Activated CD4-positive, alpha-beta memory T cell treated with anti-CD3 and anti-CD28 coated beads for 36 hours (primary cell): ENCODE measurements at regions of chr9 and their contacts with region 1.

Region 1: DNA sequence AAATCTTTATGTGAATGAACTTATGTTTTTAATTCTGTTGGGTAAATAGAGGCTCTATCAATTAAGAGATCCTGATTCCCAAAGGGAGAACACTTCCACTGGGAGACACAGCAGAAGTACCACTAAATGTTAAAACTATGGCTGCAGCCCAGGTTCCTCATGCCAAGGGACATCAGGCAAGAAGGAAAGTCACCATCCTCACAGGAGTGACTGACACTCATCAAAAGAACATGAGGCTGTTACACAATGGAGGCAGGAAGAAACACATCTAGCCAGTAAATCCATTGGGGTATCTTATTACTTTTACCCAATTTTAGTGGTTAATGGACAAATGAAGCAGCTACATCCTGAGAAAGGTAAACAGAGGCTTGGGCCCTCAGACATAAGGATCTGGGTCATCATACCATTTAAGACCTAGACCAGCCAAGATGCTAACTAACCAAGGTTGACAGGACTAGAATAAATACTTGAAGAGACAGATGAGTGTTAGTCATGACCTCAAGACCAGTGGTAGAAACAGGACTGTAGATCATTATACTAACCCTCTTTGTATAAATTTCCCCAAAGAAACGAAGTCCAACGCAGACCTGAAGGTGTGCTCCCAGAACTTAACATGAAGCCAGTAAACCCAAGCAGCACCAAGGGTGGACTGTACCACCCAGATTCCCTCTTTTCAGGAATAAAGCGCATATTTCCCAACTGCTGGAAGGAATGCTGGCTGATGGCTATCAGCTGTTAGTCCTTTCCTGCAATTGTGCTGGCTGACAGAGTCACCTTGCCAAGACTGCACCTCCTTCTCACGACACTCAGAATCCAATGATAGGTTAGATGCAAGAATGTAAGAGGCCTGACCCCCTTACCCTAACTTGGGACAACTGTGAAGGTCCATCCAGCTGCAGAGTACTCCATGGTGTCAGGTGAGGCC is 94.1 kb downstream of the MAPKAP1 start:
- DNase-seq: no peak
- H3K4me3 Mint-ChIP-seq: no peak overlapping the region
- H3K27ac Mint-ChIP-seq: no peak overlapping the region
- H3K4me1 Mint-ChIP-seq: peaks cover 40% of the 10 kb centered on the region
- H3K27me3 Mint-ChIP-seq: no peaks in the 10 kb centered on the region

Region 2: DNA sequence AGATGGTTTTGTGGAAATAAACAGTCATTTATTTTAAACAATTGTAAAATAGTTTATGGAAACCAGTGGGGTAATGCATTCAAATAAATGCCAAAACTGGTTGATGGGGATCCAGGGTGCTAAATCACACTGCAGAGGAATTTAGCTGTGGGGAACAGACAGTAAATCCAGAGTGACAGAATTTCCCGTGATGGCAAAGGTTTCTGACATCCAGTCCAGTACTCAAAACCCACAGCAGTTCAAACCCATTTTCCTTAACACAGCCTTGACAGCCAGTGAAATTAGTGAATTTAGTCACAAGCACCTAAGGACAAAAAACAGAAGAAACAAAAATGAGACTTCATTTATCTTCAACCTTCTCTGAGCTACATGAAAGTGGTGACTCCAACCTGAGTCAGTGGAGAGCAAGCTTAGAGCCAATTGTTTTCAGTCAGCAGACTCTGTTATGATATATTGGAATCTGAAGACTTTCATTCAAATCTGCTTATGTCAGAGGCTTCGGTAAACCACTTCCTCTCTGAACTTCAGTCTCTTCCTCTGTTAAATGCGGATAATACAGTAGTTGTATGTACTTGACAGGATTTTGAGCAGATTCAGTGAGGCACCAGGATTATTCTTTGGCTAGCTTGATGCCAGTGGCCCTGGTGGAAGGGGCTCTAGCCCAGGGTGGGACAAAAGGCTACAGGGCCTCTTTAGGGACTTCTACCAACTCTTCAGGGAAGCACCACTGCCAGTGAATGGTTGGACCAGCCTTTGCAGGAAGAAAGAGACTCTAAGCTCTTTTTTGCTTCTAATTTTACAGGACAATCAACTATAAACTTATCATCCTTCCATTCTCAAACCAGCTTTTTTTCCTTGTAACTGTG is 91.2 kb before region 1 on chr9:
- CTCF ChIA-PET with region 1: no interaction called
- POLR2A ChIA-PET with region 1: no interaction called
- intact Hi-C with region 1: loop called (anchors 5 kb)
- DNase-seq: peak; percentile 56
- H3K4me3 Mint-ChIP-seq: peak overlapping the region; percentile 52
- H3K27ac Mint-ChIP-seq: peak overlapping the region; percentile 81
- H3K4me1 Mint-ChIP-seq: peaks cover 52% of the 10 kb centered on the region
- H3K27me3 Mint-ChIP-seq: no peaks in the 10 kb centered on the region